ENCODE measurements at regions of chr9 and their contacts with region 1.

Region 1: GRCh38 chr9:37913480-37914153 is 9.7 kb upstream of the SLC25A51 start:
- DNase-seq: peak; percentile 86
- ATAC-seq: peak; percentile 91
- H3K4me3 Mint-ChIP-seq: no peak overlapping the region
- H3K27ac Mint-ChIP-seq: no peak overlapping the region
- H3K4me1 Mint-ChIP-seq: no peaks in the 10 kb centered on the region
- H3K27me3 Mint-ChIP-seq: no peaks in the 10 kb centered on the region
- CTCF ChIP-seq: peak; percentile 93

Region 2: DNA sequence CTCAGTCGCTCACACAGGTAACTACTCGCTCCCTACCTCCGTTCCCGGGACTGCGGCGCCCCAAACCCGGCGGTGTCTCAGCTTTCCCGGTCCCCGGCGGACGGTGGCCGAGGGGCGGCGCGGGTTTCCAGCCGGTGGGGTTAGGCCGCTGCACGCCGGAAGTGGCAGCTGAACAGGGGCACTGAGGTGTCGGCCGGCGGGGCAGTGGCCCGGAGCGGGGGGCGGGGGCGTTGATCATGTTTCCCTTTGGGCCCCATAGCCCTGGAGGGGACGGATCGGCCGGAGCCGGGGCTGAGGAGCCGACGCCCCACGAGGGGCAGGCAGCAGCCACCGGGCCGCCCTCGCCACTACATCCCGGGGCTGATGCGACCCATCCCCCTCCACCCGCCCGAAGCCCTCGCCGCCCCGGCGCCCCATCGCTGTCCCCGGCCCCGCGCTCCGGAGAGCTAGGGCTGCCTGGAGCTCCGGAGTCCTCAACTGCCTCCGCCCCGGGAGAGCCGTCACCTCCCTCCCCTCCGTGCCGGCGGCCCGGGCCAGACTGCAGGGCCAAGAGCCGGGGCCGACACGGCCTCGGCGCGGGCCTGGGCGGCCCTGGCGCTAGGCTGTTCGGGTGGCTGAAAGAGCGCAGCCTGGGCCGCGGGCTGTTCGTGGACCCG is 112.9 kb before region 1 on chr9 and contains the start of gene DCAF10:
- CTCF ChIA-PET with region 1: no interaction called
- POLR2A ChIA-PET with region 1: no interaction called
- intact Hi-C with region 1: no loop called
- DNase-seq: peak; percentile 88
- ATAC-seq: peak; percentile 89
- H3K4me3 Mint-ChIP-seq: peak within 1 kb of the TSS; percentile 93
- H3K27ac Mint-ChIP-seq: peak within 1 kb of the TSS; percentile 89
- H3K4me1 Mint-ChIP-seq: peaks cover 36% of the 10 kb centered on the region
- H3K27me3 Mint-ChIP-seq: no peaks in the 10 kb centered on the region
- CTCF ChIP-seq: no peak
- total RNA-seq, gene DCAF10: 14.7 to 15.2 TPM

Region 3: DNA sequence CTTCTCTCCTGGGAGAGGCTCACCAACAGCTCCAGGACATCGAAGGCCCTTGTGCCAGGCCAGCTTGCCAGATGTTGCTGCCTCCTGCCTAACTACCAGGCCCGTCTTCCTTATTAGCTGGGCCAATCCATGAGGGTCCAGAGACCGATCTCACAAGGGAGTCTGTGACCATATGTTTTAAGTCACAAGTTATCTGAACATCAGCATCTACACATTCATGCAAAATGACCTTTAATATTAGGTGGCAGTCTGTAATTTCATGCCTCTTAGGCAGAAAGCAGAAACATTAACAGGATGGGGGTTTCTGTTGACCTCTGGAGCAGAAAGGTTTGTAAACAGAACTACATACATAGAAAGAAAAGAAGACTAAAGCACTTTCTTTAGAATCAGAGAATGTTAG is 65.4 kb after region 1 on chr9:
- CTCF ChIA-PET with region 1: interaction called, 10 read pairs
- POLR2A ChIA-PET with region 1: no interaction called
- intact Hi-C with region 1: no loop called
- DNase-seq: no peak
- ATAC-seq: no peak
- H3K4me3 Mint-ChIP-seq: no peak overlapping the region
- H3K27ac Mint-ChIP-seq: no peak overlapping the region
- H3K4me1 Mint-ChIP-seq: no peaks in the 10 kb centered on the region
- H3K27me3 Mint-ChIP-seq: no peaks in the 10 kb centered on the region
- CTCF ChIP-seq: no peak

Region 4: GRCh38 chr9:38061326-38061977 is 147.8 kb after region 1 on chr9:
- CTCF ChIA-PET with region 1: interaction called, 15 read pairs
- POLR2A ChIA-PET with region 1: no interaction called
- intact Hi-C with region 1: no loop called
- DNase-seq: no peak
- ATAC-seq: no peak
- H3K4me3 Mint-ChIP-seq: no peak overlapping the region
- H3K27ac Mint-ChIP-seq: no peak overlapping the region
- H3K4me1 Mint-ChIP-seq: peaks cover 13% of the 10 kb centered on the region
- H3K27me3 Mint-ChIP-seq: no peaks in the 10 kb centered on the region
- CTCF ChIP-seq: no peak

Region 5: GRCh38 chr9:38088006-38088925 is 174.6 kb after region 1 on chr9:
- CTCF ChIA-PET with region 1: interaction called, 64 read pairs
- POLR2A ChIA-PET with region 1: no interaction called
- intact Hi-C with region 1: loop called (anchors 5 kb)
- DNase-seq: peak; percentile 80
- ATAC-seq: peak; percentile 77
- H3K4me3 Mint-ChIP-seq: no peak overlapping the region
- H3K27ac Mint-ChIP-seq: no peak overlapping the region
- H3K4me1 Mint-ChIP-seq: no peaks in the 10 kb centered on the region
- H3K27me3 Mint-ChIP-seq: peaks cover 5% of the 10 kb centered on the region
- CTCF ChIP-seq: peak; percentile 93

Region 6: DNA sequence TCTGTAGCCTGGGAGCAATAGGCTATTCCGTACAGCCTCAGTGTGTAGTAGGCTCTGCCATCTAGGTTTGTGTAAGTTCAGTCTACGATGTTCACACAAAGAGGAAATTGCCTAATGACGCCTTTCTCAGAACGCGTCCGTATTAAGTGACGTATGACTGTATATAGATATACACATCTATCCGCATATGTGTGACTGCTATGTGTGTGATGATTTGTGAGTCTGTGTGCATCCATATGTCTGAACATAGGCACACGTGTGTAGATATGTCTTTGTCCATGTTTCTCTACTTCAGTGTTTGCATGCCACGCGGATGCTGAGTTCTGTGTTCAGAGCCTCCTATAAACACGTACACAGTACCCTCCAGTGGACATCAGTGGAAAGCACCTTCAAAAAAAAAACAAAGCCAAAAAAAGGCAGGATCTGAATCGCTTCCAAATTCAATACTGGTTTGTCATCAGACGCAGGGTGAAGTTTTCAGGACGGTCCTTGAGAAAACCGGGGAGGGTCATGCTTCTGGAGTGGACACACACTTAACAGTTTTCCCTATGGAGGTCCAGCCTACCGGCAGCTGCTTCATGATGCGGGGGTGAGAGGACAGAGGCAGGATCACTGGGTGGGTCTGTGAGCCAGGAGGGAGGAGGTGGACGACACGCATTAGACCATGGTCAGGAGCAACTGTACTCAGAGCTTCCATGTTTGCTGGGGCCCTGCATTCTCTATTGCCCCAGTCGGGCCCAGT is 449.4 kb after region 1 on chr9:
- CTCF ChIA-PET with region 1: no interaction called
- POLR2A ChIA-PET with region 1: no interaction called
- intact Hi-C with region 1: loop called (anchors 10 kb)
- DNase-seq: peak; percentile 40
- ATAC-seq: peak; percentile 75
- H3K4me3 Mint-ChIP-seq: peak overlapping the region; percentile 34
- H3K27ac Mint-ChIP-seq: no peak overlapping the region
- H3K4me1 Mint-ChIP-seq: peaks cover 4% of the 10 kb centered on the region
- H3K27me3 Mint-ChIP-seq: peaks cover 4% of the 10 kb centered on the region
- CTCF ChIP-seq: peak; percentile 52